ENCODE measurements at regions of chr17 and their contacts with region 1.

Region 1: GRCh38 chr17:70242781-70243437 is 73.6 kb downstream of the KCNJ2 start:
- DNase-seq: no peak
- H3K4me3 ChIP-seq: no peak overlapping the region
- H3K27ac ChIP-seq: no peak overlapping the region
- H3K4me1 ChIP-seq: no peaks in the 10 kb centered on the region
- H3K27me3 ChIP-seq: no peaks in the 10 kb centered on the region
- CTCF ChIP-seq: no peak

Region 2: GRCh38 chr17:70271666-70272065 is 28.8 kb after region 1 on chr17:
- intact Hi-C with region 1: loop called (anchors 2 kb)
- DNase-seq: no peak
- H3K4me3 ChIP-seq: no peak overlapping the region
- H3K27ac ChIP-seq: no peak overlapping the region
- H3K4me1 ChIP-seq: no peaks in the 10 kb centered on the region
- H3K27me3 ChIP-seq: no peaks in the 10 kb centered on the region
- CTCF ChIP-seq: no peak

Region 3: GRCh38 chr17:70332356-70333210 is 89.7 kb after region 1 on chr17:
- intact Hi-C with region 1: loop called (anchors 10 kb)
- DNase-seq: no peak
- H3K4me3 ChIP-seq: no peak overlapping the region
- H3K27ac ChIP-seq: no peak overlapping the region
- H3K4me1 ChIP-seq: no peaks in the 10 kb centered on the region
- H3K27me3 ChIP-seq: no peaks in the 10 kb centered on the region
- CTCF ChIP-seq: no peak